ENCODE measurements at regions of chr11 and their contacts with region 1.

Region 1: DNA sequence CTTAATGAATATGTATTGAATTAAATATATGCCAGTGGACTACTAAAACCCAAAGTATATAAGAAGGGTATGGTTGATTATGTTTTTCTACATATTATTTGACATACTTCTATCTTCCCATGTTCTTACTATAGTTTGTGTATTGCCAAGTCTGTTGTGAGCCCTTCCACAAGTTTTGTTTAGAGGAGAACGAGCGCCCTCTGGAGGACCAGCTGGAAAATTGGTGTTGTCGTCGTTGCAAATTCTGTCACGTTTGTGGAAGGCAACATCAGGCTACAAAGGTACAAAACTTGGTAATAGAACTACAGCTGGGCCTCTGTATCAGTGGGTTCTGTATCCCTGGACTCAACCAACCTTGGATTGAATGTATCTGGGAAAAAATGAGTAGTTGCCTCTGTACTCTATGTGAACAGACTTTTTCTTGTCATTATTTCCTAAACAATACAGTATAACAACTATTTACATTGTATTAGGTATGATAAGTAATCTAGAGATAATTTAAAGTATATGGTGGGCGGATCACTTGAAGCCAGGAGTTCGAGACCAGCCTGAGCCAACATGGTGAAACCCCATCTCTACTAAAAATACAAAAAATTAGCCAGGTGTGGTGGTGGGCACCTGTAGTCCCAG is 38.7 kb upstream of the TTC36 start:
- DNase-seq: peak; percentile 56 to 80
- H3K4me3 ChIP-seq: no peak overlapping the region
- H3K4me1 ChIP-seq: no peaks in the 10 kb centered on the region
- H3K27me3 ChIP-seq: no peaks in the 10 kb centered on the region

Region 2: GRCh38 chr11:118198370-118198769 is 290.2 kb before region 1 on chr11:
- in situ Hi-C with region 1: loop called (anchors 25 kb)
- DNase-seq: peak; percentile 56 to 85
- H3K4me3 ChIP-seq: no peak overlapping the region
- H3K4me1 ChIP-seq: no peaks in the 10 kb centered on the region
- H3K27me3 ChIP-seq: peaks cover 3% of the 10 kb centered on the region

Region 3: DNA sequence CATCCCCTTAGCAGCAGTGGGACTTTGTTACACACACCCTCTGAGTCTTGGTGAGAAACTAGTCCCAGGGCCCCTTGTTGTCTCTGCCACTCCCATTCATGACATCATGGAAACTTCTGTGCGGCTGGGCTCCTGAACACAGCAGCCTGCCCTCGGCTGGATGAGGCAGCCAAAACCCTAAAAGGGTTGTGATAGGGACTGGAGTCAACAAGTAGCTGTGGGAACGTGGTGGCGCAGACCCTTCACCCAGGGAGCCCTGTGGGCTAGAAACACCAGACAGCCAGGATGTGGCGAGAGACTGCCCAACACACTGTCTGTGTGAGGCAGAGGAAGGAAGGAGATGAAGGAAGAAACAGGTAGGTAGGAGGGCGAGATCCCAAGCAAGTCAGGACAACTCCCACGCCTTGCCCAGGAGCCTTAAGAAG is 149.9 kb before region 1 on chr11:
- in situ Hi-C with region 1: no loop called
- DNase-seq: no peak
- H3K4me3 ChIP-seq: no peak overlapping the region
- H3K4me1 ChIP-seq: no peaks in the 10 kb centered on the region
- H3K27me3 ChIP-seq: no peaks in the 10 kb centered on the region

Region 4: GRCh38 chr11:118380571-118380970 is 108.0 kb before region 1 on chr11:
- in situ Hi-C with region 1: no loop called
- DNase-seq: no peak
- H3K4me3 ChIP-seq: no peak overlapping the region
- H3K4me1 ChIP-seq: no peaks in the 10 kb centered on the region
- H3K27me3 ChIP-seq: no peaks in the 10 kb centered on the region

Region 5: DNA sequence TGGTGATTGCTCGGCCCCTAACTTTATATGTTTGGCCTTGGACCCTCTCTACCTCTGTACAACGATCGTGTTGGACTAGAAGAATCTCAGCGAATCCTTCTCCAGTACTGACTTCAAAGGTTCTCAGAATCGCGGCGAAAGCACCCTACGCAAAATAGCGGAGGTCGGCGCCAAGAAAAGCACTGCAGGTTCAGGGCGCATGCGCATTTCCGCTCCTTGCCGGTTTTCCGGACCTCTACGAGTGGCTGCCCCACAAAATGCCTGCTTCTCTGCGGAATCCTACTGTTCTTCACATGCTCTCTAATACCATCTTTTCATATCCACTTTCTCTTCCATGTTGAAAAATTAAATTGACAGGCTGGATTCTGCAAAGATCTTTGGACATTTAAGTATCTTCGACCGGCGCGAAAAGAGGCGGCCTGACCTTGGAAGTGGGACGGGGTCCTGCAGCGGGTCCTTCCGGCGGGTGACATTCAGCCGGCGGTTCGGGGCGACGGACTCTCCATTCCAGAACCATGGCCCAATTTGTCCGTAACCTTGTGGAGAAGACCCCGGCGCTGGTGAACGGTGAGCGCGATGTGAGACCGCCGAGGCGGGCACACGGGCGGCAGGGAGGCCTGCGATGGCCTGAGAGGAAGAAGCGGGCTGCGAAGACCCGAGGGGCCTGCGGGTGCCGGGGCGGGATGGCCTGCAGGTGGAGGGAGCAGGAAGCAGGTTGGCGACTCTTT is 87.3 kb before region 1 on chr11 and contains the start of gene ATP5MG:
- in situ Hi-C with region 1: loop called (anchors 5 kb)
- DNase-seq: peak; percentile 81 to 93
- H3K4me3 ChIP-seq: peak within 1 kb of the TSS; percentile 75
- H3K4me1 ChIP-seq: peaks cover 5% of the 10 kb centered on the region
- H3K27me3 ChIP-seq: no peaks in the 10 kb centered on the region

Region 6: DNA sequence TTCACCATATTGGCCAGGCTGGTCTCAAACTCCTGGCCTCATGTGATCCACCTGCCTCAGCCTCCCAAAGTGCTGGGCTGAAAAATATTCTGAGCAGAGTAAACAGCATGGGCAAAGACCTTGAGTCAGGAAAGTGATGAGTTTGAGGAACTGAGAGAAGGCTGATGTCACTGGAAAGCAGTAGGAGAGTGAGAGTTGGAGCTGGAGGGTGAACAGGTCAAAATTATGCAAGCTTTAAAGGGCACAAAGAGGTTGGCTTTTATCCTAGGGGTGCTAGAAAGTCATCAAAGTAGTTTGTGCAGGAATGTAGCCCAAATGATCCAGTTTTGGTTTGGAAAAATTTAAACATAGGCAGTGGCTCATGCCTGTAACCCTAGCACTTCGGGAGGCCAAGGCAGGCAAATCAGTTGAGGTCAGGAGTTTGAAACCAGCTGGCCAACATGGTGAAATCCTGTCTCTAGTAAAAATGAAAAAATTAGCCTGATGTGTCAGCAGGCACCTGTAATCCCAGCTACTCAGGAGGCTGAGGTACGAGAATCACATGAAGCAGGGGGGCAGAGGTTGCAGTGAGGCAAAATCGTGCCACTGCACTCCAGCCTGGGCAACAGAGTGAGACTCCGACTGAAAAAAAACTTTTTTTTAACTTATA is 350.4 kb after region 1 on chr11:
- in situ Hi-C with region 1: no loop called
- DNase-seq: no peak
- H3K4me3 ChIP-seq: no peak overlapping the region
- H3K4me1 ChIP-seq: peaks cover 7% of the 10 kb centered on the region; the same call in 1 of the 2 replicates
- H3K27me3 ChIP-seq: no peaks in the 10 kb centered on the region

Measured in HAP-1 (cell line).